A673 (cell line): ENCODE measurements at regions of chr18 and their contacts with region 1.

Region 1: GRCh38 chr18:23077493-23078256 is 57.6 kb upstream of the CABLES1 start:
- DNase-seq: peak; percentile 59
- H3K4me3 ChIP-seq: no peak overlapping the region
- H3K27ac ChIP-seq: no peak overlapping the region
- H3K4me1 ChIP-seq: no peaks in the 10 kb centered on the region
- H3K27me3 ChIP-seq: no peaks in the 10 kb centered on the region
- CTCF ChIP-seq: peak; percentile 51

Region 2: DNA sequence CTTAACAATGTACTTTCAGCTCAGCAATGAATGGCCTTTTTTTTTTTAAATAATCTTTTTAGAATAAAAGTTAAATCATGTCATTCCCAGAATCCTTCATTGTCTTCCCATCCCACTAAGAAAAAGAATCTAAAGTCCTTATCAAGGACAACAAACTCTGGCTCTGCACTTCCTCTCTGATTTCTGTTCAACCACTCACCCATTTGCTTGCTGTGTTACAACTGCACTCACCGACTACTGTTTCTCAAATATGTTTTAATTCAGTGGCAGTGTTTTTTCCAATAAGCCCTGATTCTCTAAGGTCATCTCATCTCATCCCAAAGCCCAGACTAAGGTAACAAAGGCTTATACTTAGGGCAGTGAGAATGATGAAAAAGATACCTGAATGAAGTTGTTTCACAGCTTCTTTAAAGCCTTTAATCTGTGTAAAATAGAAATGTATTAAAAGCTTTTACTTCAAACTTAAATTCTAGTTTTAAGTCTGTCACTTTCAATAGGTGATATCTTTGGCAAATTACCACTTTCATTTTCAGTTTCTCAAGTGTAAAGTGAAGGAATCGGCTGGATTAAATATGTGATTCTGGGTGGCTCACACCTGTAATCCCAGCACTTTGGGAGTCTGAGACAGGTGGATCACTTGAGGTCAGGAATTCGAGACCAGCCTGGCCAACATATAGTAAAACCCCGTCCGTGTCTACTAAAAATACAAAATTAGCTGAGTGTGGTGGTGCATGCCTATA is 57.0 kb before region 1 on chr18:
- CTCF ChIA-PET with region 1: no interaction called
- POLR2A ChIA-PET with region 1: no interaction called
- intact Hi-C with region 1: no loop called
- DNase-seq: no peak
- H3K4me3 ChIP-seq: no peak overlapping the region
- H3K27ac ChIP-seq: no peak overlapping the region
- H3K4me1 ChIP-seq: no peaks in the 10 kb centered on the region
- H3K27me3 ChIP-seq: no peaks in the 10 kb centered on the region
- CTCF ChIP-seq: no peak

Region 3: GRCh38 chr18:23131693-23132319 is 54.1 kb after region 1 on chr18:
- CTCF ChIA-PET with region 1: no interaction called
- POLR2A ChIA-PET with region 1: no interaction called
- intact Hi-C with region 1: no loop called
- DNase-seq: peak; percentile 84
- H3K4me3 ChIP-seq: no peak overlapping the region
- H3K27ac ChIP-seq: no peak overlapping the region
- H3K4me1 ChIP-seq: peaks cover 12% of the 10 kb centered on the region
- H3K27me3 ChIP-seq: no peaks in the 10 kb centered on the region
- CTCF ChIP-seq: peak; percentile 81

Region 4: GRCh38 chr18:23377669-23378301 is 300.1 kb after region 1 on chr18:
- CTCF ChIA-PET with region 1: no interaction called
- POLR2A ChIA-PET with region 1: no interaction called
- intact Hi-C with region 1: loop called (anchors 2 kb)
- DNase-seq: peak; percentile 48
- H3K4me3 ChIP-seq: no peak overlapping the region
- H3K27ac ChIP-seq: no peak overlapping the region
- H3K4me1 ChIP-seq: peaks cover 7% of the 10 kb centered on the region
- H3K27me3 ChIP-seq: no peaks in the 10 kb centered on the region
- CTCF ChIP-seq: no peak